Sigmoid colon (tissue), 7 donors: ENCODE measurements at regions of chr17 and their contacts with region 1.

Region 1: GRCh38 chr17:34254651-34255380 is at the start of gene CCL2:
- DNase-seq: peak; percentile 92
- H3K4me3 ChIP-seq: peak within 1 kb of the TSS; percentile 19 to 50 (median 42)
- H3K27ac ChIP-seq: peak within 1 kb of the TSS; percentile 80 to 92 (median 84)
- H3K4me1 ChIP-seq: peaks cover 0 to 71% (median 62%) of the 10 kb centered on the region in 4 donors
- H3K27me3 ChIP-seq: no peaks in the 10 kb centered on the region
- CTCF ChIP-seq: no peak
- EP300 ChIP-seq: peak in 1 of 4 donors; percentile 22
- POLR2A ChIP-seq: peak in 1 of 2 donors; percentile 20
- total RNA-seq, gene CCL2: 27.6 to 862 (median 38.6) TPM

Region 2: DNA sequence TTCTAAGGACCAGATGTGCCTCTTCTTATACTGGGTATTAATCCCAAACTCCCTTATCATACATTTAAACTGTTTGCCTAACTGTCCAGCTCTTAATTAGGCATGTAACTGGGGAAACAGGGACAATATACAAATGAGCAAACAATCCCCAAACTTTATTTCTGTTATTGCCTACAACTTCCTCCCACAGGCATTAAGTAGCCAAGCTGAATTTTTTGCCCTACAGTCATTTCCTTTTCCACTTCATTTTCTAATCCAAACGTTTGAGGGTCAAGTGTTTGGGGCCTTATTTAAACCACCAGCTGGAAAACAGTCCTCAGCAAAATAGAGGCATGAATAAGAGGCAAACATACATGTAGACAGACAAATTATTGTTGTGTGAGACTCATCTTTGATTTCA is 77.2 kb before region 1 on chr17:
- intact Hi-C with region 1: no loop called
- DNase-seq: no peak
- H3K4me3 ChIP-seq: no peak overlapping the region
- H3K27ac ChIP-seq: peak overlapping the region in 1 of 4 donors; percentile 14
- H3K4me1 ChIP-seq: peaks cover 0 to 8% (median 0%) of the 10 kb centered on the region in 4 donors
- H3K27me3 ChIP-seq: peaks cover 0 to 3% (median 0%) of the 10 kb centered on the region in 3 donors
- CTCF ChIP-seq: no peak
- EP300 ChIP-seq: no peak
- POLR2A ChIP-seq: no peak

Region 3: DNA sequence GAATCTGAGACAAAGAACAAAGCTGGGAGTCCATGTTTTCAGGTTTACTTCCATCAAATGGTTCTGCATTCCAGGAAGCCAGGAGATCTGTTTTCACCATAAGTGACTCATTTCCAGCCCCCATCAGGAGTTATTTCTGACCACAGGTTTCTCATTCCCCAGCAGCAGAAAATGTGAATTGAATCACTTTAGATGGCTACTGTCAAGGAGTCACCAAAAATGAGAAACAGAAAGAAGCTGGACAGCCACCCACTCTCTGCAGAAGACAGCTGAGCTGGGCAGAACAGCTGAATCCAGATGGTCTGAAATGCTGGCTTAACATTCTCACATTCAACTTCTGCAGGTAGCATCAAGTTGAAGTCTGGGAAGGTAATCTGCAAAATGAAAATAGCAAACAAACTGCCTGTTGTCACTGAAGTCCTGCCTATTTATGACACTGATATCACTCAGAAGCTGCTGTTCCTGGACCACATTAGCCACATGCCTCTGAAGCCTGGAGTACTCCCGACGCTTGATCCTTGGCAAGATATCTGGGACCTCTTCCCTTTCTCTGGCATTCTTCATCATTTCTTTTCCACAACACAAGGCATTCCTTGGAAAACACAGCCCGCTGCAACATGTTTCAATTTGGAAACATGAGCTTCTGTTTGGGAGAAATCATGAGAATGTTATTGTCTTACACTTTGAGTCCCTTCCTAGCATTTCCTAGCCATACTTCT is 46.0 kb after region 1 on chr17:
- intact Hi-C with region 1: loop called (anchors 5 kb)
- DNase-seq: peak; percentile 69
- H3K4me3 ChIP-seq: no peak overlapping the region
- H3K27ac ChIP-seq: peak overlapping the region; percentile 9 to 61 (median 28)
- H3K4me1 ChIP-seq: peaks cover 0 to 31% (median 25%) of the 10 kb centered on the region in 4 donors
- H3K27me3 ChIP-seq: no peaks in the 10 kb centered on the region
- CTCF ChIP-seq: no peak
- EP300 ChIP-seq: no peak
- POLR2A ChIP-seq: no peak